Activated B cell treated with CpG ODN at 0.5 μM for 24 hours (primary cell): ENCODE measurements at regions of chr2 and their contacts with region 1.

Region 1: DNA sequence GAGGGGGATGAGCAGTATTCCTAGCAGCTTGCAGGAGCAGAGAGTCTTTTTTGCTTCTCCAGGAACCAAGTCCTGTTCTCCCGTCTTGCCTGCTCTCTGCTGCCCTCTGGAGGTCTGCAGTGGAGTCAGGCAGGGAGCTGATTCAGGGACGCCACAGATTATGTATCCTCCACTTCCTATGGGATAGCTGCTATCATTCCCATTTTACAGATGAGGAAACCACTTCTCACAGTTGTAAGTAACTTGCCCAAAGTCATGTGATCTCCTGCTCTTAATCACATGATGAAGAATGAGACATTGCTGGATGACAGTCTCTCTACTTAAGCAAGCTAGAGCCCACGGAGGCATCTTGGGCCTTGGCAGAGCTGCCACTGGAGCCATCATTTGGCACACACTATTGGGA is 8.3 kb downstream of the SLC4A5 start:
- DNase-seq: peak; percentile 62
- ATAC-seq: peak; percentile 66
- H3K4me3 Mint-ChIP-seq: no peak overlapping the region
- H3K27ac Mint-ChIP-seq: no peak overlapping the region
- H3K4me1 Mint-ChIP-seq: no peaks in the 10 kb centered on the region
- H3K27me3 Mint-ChIP-seq: no peaks in the 10 kb centered on the region
- CTCF ChIP-seq: peak; percentile 96

Region 2: GRCh38 chr2:74250189-74250631 is 84.7 kb before region 1 on chr2:
- CTCF ChIA-PET with region 1: interaction called, 81 read pairs
- POLR2A ChIA-PET with region 1: no interaction called
- intact Hi-C with region 1: loop called (anchors 1 kb)
- DNase-seq: peak; percentile 43
- ATAC-seq: peak; percentile 64
- H3K4me3 Mint-ChIP-seq: no peak overlapping the region
- H3K27ac Mint-ChIP-seq: no peak overlapping the region
- H3K4me1 Mint-ChIP-seq: peaks cover 2% of the 10 kb centered on the region
- H3K27me3 Mint-ChIP-seq: no peaks in the 10 kb centered on the region
- CTCF ChIP-seq: no peak

Region 3: DNA sequence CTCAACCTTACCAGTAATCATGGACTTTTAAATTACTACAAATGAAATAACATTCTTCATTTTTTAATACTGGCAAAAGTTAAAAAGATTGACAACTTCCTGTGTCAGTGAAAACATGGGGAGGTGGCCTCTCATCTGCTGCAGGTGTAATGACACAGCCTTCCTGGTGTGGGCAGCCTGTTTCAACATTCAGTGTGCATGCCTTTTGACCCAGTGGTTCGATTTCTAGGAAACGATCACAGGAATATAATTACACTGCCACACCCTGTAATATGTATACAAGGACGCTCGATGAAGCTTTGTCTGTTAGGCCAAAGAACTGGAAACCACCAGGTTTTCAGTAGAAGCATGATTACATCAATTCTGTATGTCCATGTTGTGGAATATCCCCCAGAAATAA is 67.9 kb before region 1 on chr2:
- CTCF ChIA-PET with region 1: interaction called, 8 read pairs
- POLR2A ChIA-PET with region 1: no interaction called
- intact Hi-C with region 1: loop called (anchors 5 kb)
- DNase-seq: no peak
- ATAC-seq: peak; percentile 37
- H3K4me3 Mint-ChIP-seq: no peak overlapping the region
- H3K27ac Mint-ChIP-seq: no peak overlapping the region
- H3K4me1 Mint-ChIP-seq: peaks cover 3% of the 10 kb centered on the region
- H3K27me3 Mint-ChIP-seq: no peaks in the 10 kb centered on the region
- CTCF ChIP-seq: no peak

Region 4: GRCh38 chr2:74602586-74603281 is 267.8 kb after region 1 on chr2:
- CTCF ChIA-PET with region 1: no interaction called
- POLR2A ChIA-PET with region 1: no interaction called
- intact Hi-C with region 1: no loop called
- DNase-seq: no peak
- ATAC-seq: no peak
- H3K4me3 Mint-ChIP-seq: no peak overlapping the region
- H3K27ac Mint-ChIP-seq: no peak overlapping the region
- H3K4me1 Mint-ChIP-seq: peaks cover 5% of the 10 kb centered on the region
- H3K27me3 Mint-ChIP-seq: peaks cover 19% of the 10 kb centered on the region
- CTCF ChIP-seq: no peak